ENCODE measurements at regions of chr12 and their contacts with region 1.

Region 1: DNA sequence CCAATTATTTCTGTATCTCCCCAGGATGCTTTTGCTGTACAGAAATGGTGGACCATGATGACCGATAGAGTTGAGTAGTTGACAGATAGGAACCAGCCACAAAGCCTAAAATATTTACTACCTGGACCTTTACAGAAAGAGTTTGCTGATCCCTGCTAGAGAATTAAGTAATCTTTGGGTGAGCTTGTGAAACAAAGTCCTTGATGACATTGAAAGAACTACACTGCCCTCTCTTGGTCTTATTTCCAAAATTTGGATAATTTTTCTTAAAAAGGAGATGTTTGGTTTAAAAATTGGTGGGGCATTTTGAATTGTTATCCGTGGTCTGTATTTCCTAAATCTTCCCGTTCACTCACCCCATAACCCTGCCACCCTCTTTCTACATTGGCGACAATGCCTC is 13.7 kb upstream of the TCTN1 start:
- DNase-seq: no peak
- H3K4me3 ChIP-seq: no peak overlapping the region
- H3K27ac ChIP-seq: no peak overlapping the region
- H3K4me1 ChIP-seq: no peaks in the 10 kb centered on the region
- H3K27me3 ChIP-seq: no peaks in the 10 kb centered on the region
- CTCF ChIP-seq: peak in 2 of 4 experiments; percentile 66 to 70
- POLR2A ChIP-seq: no peak

Region 2: DNA sequence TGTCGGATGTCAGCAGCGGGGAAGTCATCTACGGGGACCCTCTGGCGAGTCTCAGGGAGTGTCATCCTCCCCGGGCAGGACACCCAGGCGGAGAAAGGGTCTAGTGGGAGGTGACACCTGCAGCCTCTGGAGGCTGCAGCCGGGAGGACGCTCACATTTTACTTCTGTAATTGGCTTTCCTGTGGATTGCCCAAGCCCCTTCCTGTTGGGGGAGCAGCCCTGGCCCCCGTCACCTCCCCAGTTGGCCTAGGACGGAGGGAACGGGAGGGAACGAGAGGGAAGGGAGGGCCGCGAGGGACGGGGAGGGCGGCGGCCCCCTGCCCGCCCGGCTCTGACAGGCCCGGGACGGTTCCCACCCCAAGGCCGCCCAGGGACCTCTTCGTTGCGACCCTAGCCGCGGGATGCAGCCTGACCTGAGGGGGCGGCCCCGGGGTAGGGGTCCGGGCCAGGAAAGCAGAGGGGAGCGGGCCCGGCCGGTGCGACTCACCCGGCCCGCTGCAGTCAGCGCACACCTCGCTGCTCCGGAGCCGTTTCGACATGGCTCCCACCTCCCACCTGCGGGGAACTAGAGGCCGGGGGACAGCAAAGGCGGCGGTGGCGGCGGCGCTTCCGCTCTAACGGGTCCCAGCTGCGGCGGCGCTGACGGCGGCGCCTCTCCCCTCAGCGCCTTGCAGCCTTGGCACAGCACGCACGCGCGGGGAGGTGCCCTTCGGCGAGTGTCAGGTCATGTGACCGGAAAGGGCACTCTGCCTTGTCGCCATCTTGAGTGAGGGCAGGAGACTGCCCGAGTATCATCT is 604.4 kb before region 1 on chr12 and contains the start of gene GIT2:
- intact Hi-C with region 1: no loop called
- DNase-seq: peak; percentile 92
- H3K4me3 ChIP-seq: peak within 1 kb of the TSS; percentile 85 to 88
- H3K27ac ChIP-seq: peak within 1 kb of the TSS; percentile 48 to 54
- H3K4me1 ChIP-seq: no peaks in the 10 kb centered on the region
- H3K27me3 ChIP-seq: no peaks in the 10 kb centered on the region
- CTCF ChIP-seq: no peak
- POLR2A ChIP-seq: peak; percentile 74
- total RNA-seq, gene GIT2: 20.9 to 43.3 TPM

Region 3: DNA sequence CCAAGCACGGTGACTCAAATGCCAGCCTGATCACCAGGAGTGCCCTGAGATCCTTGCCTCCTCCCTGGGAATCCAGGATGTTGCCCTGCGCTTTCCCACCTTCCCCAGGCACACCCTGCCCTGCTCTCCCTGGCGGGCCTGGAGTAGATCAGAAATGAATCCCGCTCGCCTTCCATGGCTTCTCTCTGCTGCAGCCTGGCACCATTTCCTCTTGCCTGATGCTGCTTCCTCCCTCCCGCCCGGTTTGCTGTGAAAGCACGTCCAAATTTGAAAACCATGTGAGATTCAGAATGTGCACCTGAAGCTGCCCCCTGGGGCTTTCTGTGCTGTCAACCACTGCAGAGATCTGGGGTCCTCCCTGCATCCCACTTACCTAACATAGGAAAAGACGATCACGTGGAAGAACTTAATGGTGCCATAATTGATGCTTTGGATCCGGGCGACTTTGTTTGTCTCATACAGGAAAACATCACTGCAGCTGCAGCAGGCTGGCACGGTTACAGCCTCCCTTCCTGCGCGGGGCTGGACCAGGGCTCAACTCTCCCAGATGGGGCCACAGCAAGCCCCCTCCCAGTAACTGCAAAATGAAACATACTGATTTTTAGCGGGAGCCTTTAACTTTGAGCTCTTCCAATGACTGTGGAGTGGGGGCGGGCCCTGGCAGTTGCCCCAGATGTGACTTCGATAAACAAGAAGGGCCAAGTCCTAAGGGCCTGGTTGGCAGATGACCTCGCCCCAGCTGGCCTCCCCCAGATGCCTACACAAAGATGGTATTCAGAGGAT is 527.0 kb before region 1 on chr12:
- intact Hi-C with region 1: no loop called
- DNase-seq: no peak
- H3K4me3 ChIP-seq: peak overlapping the region; percentile 12 to 15
- H3K27ac ChIP-seq: no peak overlapping the region
- H3K4me1 ChIP-seq: no peaks in the 10 kb centered on the region
- H3K27me3 ChIP-seq: no peaks in the 10 kb centered on the region
- CTCF ChIP-seq: no peak
- POLR2A ChIP-seq: no peak

Region 4: DNA sequence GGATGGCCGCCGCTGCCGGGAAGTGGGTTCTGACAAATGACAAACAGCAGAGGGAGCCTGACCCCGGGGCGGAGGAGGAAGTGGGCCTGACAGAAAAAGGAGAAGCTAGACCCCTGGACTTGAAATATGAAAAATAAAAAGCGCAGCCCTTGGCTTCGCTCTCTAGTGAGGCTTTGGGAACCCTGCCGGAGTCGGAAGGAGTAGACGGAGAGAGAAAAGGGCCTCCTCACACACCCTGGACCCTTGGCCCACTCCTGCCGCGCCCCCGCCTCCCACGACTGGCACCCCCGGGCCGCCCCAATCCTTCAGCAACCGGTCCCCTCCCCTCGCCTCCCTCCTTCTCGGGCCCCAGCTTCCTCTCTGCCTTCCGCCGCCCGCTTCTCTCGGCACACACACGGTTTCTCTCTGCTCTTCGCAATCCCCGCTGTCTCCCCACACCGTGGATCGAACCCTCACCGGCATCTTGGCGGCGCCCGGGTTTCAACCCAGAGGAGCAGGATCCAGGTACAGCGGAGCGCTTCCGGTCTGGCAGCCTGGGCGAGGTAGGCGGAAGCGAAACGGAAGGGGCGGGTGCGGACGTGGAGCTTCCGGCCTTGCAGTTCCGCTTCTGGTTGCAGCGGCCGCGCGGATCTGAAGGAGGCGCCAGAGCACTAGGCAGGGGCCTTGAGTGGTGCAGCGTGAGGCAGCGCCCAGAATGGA is 150.3 kb before region 1 on chr12 and contains the start of gene ARPC3:
- intact Hi-C with region 1: loop called (anchors 5 kb)
- DNase-seq: peak; percentile 93
- H3K4me3 ChIP-seq: peak within 1 kb of the TSS; percentile 73 to 82
- H3K27ac ChIP-seq: peak within 1 kb of the TSS; percentile 79 to 82
- H3K4me1 ChIP-seq: peaks cover 3% of the 10 kb centered on the region
- H3K27me3 ChIP-seq: no peaks in the 10 kb centered on the region
- CTCF ChIP-seq: peak; percentile 55 to 94 (median 84)
- POLR2A ChIP-seq: peak; percentile 45
- total RNA-seq, gene ARPC3: 293 to 338 TPM

Region 5: DNA sequence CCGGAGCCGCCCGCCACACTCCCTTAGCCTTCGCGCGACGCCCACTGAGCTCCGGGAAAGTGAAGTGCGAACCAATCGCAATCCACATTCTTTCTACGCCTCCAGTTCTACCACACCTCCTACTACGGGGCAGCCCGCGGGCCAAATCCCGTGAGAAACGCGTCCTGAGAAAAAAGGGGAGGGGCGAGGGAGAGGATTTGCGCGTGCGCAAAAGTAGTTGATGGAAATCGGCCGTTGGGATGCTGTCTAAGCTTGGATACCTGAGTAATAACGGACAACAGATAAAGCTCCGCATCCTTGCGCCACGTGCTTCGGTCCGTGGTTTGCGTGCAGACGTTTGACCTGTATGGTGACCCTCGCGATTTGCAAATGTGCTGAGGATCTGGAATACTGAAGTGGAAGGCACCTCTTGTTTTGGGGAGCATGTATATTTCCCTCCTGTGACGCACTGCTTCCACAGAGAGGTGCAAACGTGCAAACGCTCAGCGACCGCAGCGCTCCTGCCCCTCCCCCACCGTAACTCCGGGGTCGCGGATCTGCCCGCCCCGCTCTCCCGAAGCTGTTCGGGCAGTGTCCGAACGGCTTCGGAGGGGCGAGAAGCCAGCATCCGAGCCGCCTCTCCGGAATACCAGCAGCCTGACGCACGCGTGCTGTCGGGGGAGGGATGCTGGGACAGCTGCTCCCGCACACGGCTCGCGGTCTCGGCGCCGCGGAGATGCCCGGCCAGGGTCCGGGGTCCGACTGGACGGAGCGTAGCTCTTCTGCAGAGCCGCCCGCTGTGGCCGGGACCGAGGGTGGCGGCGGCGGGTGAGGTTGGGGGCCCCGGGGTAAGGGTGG is 131.8 kb before region 1 on chr12 and contains the starts of genes FAM216A and GPN3:
- intact Hi-C with region 1: loop called (anchors 5 kb)
- DNase-seq: peak; percentile 98
- H3K4me3 ChIP-seq: peak within 1 kb of the TSS; percentile 51 to 70
- H3K27ac ChIP-seq: peak within 1 kb of the TSS; percentile 80 to 92
- H3K4me1 ChIP-seq: no peaks in the 10 kb centered on the region
- H3K27me3 ChIP-seq: no peaks in the 10 kb centered on the region
- CTCF ChIP-seq: peak in 2 of 4 experiments; percentile 18 to 21
- POLR2A ChIP-seq: peak; percentile 86
- total RNA-seq, gene FAM216A: 3.6 to 11.5 TPM
- total RNA-seq, gene GPN3: 28.4 to 40.2 TPM

Region 6: DNA sequence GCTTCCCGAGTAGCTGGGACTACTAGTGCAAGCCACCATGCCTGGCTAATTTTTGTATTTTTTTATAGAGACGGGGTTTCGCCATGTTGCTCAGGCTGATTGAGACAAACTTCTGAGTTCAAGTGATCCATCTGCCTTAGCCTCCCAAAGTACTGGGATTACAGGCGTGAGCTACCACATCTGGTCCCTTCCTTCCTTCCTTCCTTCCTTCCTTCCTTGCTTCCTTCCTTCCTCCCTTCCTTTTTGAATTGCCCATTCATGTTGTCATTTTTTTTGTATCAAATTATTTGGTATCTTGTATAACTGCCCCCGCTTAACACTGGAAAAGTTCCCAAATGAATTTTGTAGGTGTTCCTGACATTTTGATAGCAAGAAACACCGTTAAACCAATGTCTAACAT is 86.4 kb before region 1 on chr12:
- intact Hi-C with region 1: loop called (anchors 1 kb)
- DNase-seq: no peak
- H3K4me3 ChIP-seq: no peak overlapping the region
- H3K27ac ChIP-seq: no peak overlapping the region
- H3K4me1 ChIP-seq: no peaks in the 10 kb centered on the region
- H3K27me3 ChIP-seq: no peaks in the 10 kb centered on the region
- CTCF ChIP-seq: no peak
- POLR2A ChIP-seq: no peak

Region 7: GRCh38 chr12:110698171-110698902 is 98.1 kb after region 1 on chr12:
- intact Hi-C with region 1: loop called (anchors 5 kb)
- DNase-seq: peak; percentile 46
- H3K4me3 ChIP-seq: no peak overlapping the region
- H3K27ac ChIP-seq: no peak overlapping the region
- H3K4me1 ChIP-seq: no peaks in the 10 kb centered on the region
- H3K27me3 ChIP-seq: no peaks in the 10 kb centered on the region
- CTCF ChIP-seq: peak; percentile 27 to 75 (median 48)
- POLR2A ChIP-seq: no peak

Measured in prostate gland (tissue), 2 donors.